Right ventricle myocardium superior (tissue), 1 donor: ENCODE measurements at regions of chrX and their contacts with region 1.

Region 1: DNA sequence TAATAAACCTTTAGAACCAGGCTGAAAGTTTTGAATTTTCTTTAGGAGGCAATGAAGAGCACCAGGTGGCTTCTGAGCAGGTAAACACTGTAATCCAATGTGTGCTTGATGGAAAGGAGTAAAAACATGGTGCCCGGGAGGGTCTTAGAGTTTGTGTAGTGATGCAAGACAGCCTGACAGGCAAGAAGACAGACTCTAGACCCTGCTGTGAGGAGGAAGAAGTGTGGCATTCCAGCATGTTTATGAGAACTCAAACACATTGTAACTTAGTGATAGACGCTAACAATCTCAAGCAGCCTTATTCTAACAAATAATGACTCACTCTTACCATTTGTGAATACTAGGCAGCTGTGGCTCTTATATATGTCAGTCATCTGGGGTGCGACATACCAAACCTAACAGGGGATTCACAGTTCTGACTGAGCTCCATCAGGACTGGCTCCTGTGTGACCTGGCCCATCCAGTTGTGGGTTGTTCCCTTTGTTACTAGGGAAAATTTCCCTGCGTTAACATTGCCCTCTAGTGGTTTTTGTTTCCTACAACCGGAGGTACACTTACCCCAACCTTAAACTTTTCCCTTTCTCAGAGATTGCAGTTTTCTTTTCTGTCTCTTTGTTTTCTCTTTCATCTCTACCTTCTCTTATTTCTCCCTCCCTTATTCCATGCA is 53.8 kb downstream of the VSIG4 start:
- DNase-seq: no peak
- ATAC-seq: peak; percentile 81

Region 2: GRCh38 chrX:65581661-65582339 is 404.3 kb before region 1 on chrX:
- intact Hi-C with region 1: loop called (anchors 5 kb)
- DNase-seq: peak; percentile 37
- ATAC-seq: peak; percentile 90

Region 3: GRCh38 chrX:66051980-66052379 is 65.9 kb after region 1 on chrX:
- intact Hi-C with region 1: no loop called
- DNase-seq: no peak
- ATAC-seq: no peak